CD4-positive, alpha-beta memory T cell (primary cell): ENCODE measurements at regions of chr5 and their contacts with region 1.

Region 1: DNA sequence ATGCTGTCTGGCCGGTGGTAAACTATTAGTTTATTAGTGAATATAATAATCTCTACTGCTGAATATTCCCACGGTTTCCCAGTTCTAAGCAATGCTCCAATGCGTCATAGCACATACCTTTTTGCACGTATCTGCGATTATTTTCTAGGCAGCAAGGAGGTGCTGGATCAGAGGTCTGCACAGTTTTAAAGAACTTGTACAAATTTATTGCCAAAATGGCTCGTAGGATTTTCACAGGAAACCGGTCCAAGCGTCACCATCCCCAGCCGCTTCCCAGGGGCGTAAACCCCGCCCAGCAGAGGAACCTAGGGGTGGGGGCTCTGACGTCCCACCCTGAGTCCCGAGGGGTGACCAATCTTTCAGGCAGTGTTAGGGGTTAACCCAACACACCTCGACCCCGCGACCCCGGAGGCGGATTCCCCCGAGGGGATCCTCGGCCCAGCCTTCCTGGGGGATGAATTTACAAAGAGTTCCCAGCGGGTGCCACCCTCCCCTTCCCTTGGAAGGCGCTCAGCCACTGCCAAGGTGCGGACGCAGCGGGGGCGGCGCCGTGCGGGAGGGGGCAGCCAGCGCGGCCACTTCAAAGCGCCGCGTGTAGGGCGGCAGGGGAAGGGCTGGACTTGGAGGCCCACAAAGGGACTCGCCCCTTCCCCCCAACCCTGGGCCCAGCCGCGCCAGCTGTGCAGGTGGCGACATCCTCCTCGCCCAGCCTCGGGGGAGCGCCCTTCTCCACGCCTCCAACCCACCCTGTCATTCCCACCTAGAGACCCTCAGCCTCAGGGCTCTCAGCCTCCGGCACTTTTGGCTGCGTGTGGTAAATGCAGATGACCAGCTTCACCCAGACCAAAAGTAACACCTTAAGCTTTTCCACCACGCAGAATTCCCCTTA is 43.5 kb upstream of the TCF7 start:
- DNase-seq: peak in 2 of 5 donors; percentile 32 to 59
- H3K4me3 ChIP-seq: peak overlapping the region; percentile 39 to 53
- H3K4me3 Mint-ChIP-seq: peak overlapping the region; percentile 84 to 92 (median 88)
- H3K27ac ChIP-seq: peak overlapping the region; percentile 48
- H3K27ac Mint-ChIP-seq: peak overlapping the region; percentile 79 to 93 (median 87)
- H3K4me1 ChIP-seq: peaks cover 60% of the 10 kb centered on the region
- H3K4me1 Mint-ChIP-seq: peaks cover 42 to 70% (median 56%) of the 10 kb centered on the region in 4 donors
- H3K27me3 ChIP-seq: no peaks in the 10 kb centered on the region
- H3K27me3 Mint-ChIP-seq: no peaks in the 10 kb centered on the region

Region 2: DNA sequence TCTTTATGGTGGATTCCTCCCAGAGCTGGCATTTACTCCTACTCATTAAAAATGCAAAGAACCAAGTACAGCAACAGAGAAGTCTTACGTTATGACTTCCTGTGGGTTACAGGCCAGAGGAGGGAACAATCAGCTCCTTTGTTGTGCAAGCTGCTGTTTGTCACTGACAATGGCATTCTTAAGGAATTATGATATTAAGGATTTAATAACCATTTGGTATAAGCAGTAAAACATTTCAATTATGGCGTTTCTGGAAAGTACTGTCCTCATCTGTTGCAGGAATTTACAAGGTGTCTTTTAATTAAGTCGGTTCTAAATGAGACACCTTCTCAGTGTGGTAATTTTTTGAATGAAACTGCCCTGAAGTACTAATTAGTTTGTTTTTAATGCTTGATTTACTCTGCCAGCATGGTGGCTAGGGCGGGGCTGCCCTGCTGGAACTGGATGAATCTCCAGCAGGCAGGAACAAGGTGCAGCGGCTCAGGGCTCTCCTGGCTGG is 17.1 kb before region 1 on chr5:
- CTCF ChIA-PET with region 1: interaction called, 7 read pairs
- POLR2A ChIA-PET with region 1: interaction called, 11 read pairs
- intact Hi-C with region 1: loop called (anchors 2 kb)
- DNase-seq: peak in 4 of 5 donors; percentile 22 to 30 (median 26)
- H3K4me3 ChIP-seq: no peak overlapping the region
- H3K4me3 Mint-ChIP-seq: peak overlapping the region; percentile 29 to 80 (median 73)
- H3K27ac ChIP-seq: no peak overlapping the region
- H3K27ac Mint-ChIP-seq: peak overlapping the region; percentile 65 to 87 (median 73)
- H3K4me1 ChIP-seq: peaks cover 32% of the 10 kb centered on the region
- H3K4me1 Mint-ChIP-seq: peaks cover 16 to 44% (median 34%) of the 10 kb centered on the region in 4 donors
- H3K27me3 ChIP-seq: no peaks in the 10 kb centered on the region
- H3K27me3 Mint-ChIP-seq: no peaks in the 10 kb centered on the region

Region 3: GRCh38 chr5:134092878-134093277 is 21.9 kb after region 1 on chr5:
- CTCF ChIA-PET with region 1: interaction called, 10 read pairs
- POLR2A ChIA-PET with region 1: interaction called, 58 read pairs
- intact Hi-C with region 1: no loop called
- DNase-seq: no peak
- H3K4me3 ChIP-seq: no peak overlapping the region
- H3K4me3 Mint-ChIP-seq: peak overlapping the region in 7 of 8 donors; percentile 9 to 77 (median 57)
- H3K27ac ChIP-seq: no peak overlapping the region
- H3K27ac Mint-ChIP-seq: peak overlapping the region; percentile 72 to 94 (median 79)
- H3K4me1 ChIP-seq: peaks cover 79% of the 10 kb centered on the region
- H3K4me1 Mint-ChIP-seq: peaks cover 58 to 86% (median 75%) of the 10 kb centered on the region in 4 donors
- H3K27me3 ChIP-seq: no peaks in the 10 kb centered on the region
- H3K27me3 Mint-ChIP-seq: no peaks in the 10 kb centered on the region

Region 4: DNA sequence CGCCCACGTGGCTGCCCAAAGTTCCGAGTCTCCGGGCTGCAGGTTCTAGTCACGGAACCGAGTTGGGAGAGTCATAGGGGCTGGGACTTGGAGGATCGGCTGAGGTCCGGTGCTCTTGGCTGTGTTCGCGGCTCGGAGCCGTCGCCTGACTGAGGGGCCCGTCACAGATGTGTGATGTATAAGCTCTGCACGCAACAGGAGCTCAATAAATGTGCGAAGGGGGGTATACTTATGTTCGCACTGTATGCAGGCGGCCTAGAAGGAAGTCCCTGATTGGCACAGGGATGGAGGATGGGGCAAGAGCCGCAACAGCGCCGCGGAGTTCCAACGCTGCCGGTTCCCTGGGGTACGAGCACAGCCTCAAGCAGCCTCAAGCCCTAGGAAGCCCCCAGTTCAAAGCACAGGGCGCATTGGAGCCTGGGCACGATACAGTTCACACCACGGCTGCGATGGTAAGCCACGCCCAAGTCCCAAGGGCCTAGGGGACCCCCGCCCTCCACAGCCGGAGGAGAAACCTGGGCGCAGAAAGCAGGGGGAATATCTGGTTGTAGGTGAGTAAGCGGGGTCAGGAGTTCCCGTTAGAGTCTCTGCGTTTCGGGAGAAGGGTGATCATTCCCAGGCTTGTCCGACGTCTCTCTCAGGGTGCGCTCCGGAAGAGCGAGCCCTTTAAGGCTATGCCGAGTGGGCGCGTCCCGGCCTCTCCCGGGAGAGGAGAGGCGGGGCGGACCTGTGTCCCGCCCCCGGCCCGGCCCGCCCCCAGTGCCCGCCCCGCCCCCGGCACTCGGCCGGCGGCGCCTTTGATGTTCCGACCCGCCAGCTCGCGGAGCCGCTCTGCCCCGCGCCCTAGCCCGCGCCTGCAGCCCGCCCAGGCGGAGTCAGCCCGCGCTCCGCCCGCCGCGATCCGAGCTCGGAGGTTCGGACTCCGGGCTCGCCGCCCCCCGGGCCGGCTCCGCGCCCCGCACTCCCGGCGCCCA is 43.2 kb after region 1 on chr5 and contains the start of gene TCF7:
- CTCF ChIA-PET with region 1: interaction called, 16 read pairs
- POLR2A ChIA-PET with region 1: interaction called, 48 read pairs
- intact Hi-C with region 1: no loop called
- DNase-seq: peak; percentile 78 to 83 (median 81)
- H3K4me3 ChIP-seq: peak within 1 kb of the TSS; percentile 92 to 97
- H3K4me3 Mint-ChIP-seq: peak within 1 kb of the TSS; percentile 96 to 99 (median 97)
- H3K27ac ChIP-seq: peak within 1 kb of the TSS; percentile 97
- H3K27ac Mint-ChIP-seq: peak within 1 kb of the TSS; percentile 94 to 98 (median 97)
- H3K4me1 ChIP-seq: peaks cover 68% of the 10 kb centered on the region
- H3K4me1 Mint-ChIP-seq: peaks cover 38 to 80% (median 53%) of the 10 kb centered on the region in 4 donors
- H3K27me3 ChIP-seq: no peaks in the 10 kb centered on the region
- H3K27me3 Mint-ChIP-seq: no peaks in the 10 kb centered on the region
- total RNA-seq, gene TCF7: 770 to 841 TPM

Region 5: GRCh38 chr5:134132372-134133034 is 61.5 kb after region 1 on chr5:
- CTCF ChIA-PET with region 1: interaction called, 5 read pairs
- POLR2A ChIA-PET with region 1: interaction called, 32 read pairs
- intact Hi-C with region 1: no loop called
- DNase-seq: peak; percentile 86 to 97 (median 88)
- H3K4me3 ChIP-seq: peak overlapping the region; percentile 43 to 68
- H3K4me3 Mint-ChIP-seq: peak overlapping the region; percentile 86 to 99 (median 96)
- H3K27ac ChIP-seq: peak overlapping the region; percentile 97
- H3K27ac Mint-ChIP-seq: peak overlapping the region; percentile 95 to 99 (median 98)
- H3K4me1 ChIP-seq: peaks cover 100% of the 10 kb centered on the region
- H3K4me1 Mint-ChIP-seq: peaks cover 65 to 100% (median 85%) of the 10 kb centered on the region in 4 donors
- H3K27me3 ChIP-seq: no peaks in the 10 kb centered on the region
- H3K27me3 Mint-ChIP-seq: no peaks in the 10 kb centered on the region

Region 6: GRCh38 chr5:134145779-134146581 is 75.0 kb after region 1 on chr5:
- CTCF ChIA-PET with region 1: interaction called, 28 read pairs
- POLR2A ChIA-PET with region 1: interaction called, 41 read pairs
- intact Hi-C with region 1: loop called (anchors 1 kb)
- DNase-seq: peak; percentile 74 to 83 (median 77)
- H3K4me3 ChIP-seq: no peak overlapping the region
- H3K4me3 Mint-ChIP-seq: peak overlapping the region in 2 of 8 donors; percentile 26 to 30
- H3K27ac ChIP-seq: no peak overlapping the region
- H3K27ac Mint-ChIP-seq: peak overlapping the region; percentile 11 to 98 (median 89)
- H3K4me1 ChIP-seq: peaks cover 24% of the 10 kb centered on the region
- H3K4me1 Mint-ChIP-seq: peaks cover 26 to 70% (median 44%) of the 10 kb centered on the region in 4 donors
- H3K27me3 ChIP-seq: no peaks in the 10 kb centered on the region
- H3K27me3 Mint-ChIP-seq: no peaks in the 10 kb centered on the region